ENCODE measurements at regions of chr16 and their contacts with region 1.

Region 1: DNA sequence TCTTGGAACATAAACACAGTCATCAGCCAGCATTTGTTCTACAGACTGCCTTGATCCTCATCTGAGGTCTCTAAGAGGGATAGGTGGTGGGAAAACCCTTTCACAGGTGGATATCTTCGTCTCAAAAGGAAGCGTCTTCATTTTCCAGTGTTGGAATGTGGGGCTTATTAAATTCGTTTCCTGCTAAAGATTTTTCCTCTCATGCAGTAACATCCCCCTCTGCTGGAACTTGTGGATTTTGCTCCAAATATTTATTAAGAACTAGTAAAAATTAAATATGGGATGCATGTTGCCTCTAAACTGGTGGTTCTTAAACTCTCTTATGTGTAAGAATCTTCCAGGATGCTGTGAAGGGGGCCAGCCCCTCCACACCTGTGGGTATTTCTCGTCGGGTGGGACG is 20.1 kb upstream of the MLYCD start:
- DNase-seq: peak; percentile 18
- ATAC-seq: no peak
- H3K4me3 ChIP-seq: no peak overlapping the region
- H3K27ac ChIP-seq: no peak overlapping the region
- H3K4me1 ChIP-seq: no peaks in the 10 kb centered on the region
- H3K27me3 ChIP-seq: peaks cover 3% of the 10 kb centered on the region
- CTCF ChIP-seq: peak; percentile 55

Region 2: GRCh38 chr16:83793184-83793855 is 85.5 kb before region 1 on chr16:
- CTCF ChIA-PET with region 1: no interaction called
- POLR2A ChIA-PET with region 1: no interaction called
- in situ Hi-C with region 1: no loop called
- intact Hi-C with region 1: no loop called
- DNase-seq: no peak
- ATAC-seq: no peak
- H3K4me3 ChIP-seq: no peak overlapping the region
- H3K27ac ChIP-seq: no peak overlapping the region
- H3K4me1 ChIP-seq: no peaks in the 10 kb centered on the region
- H3K27me3 ChIP-seq: no peaks in the 10 kb centered on the region
- CTCF ChIP-seq: no peak

Region 3: GRCh38 chr16:83826146-83826913 is 52.5 kb before region 1 on chr16:
- CTCF ChIA-PET with region 1: no interaction called
- POLR2A ChIA-PET with region 1: no interaction called
- in situ Hi-C with region 1: no loop called
- intact Hi-C with region 1: loop called (anchors 5 kb)
- DNase-seq: peak; percentile 62
- ATAC-seq: peak; percentile 95
- H3K4me3 ChIP-seq: no peak overlapping the region; a peak in 1 of 4 replicates
- H3K27ac ChIP-seq: no peak overlapping the region
- H3K4me1 ChIP-seq: no peaks in the 10 kb centered on the region
- H3K27me3 ChIP-seq: no peaks in the 10 kb centered on the region
- CTCF ChIP-seq: peak; percentile 84

Measured in Panc1 (cell line).